ENCODE measurements at regions of chr1 and their contacts with region 1.

Region 1: DNA sequence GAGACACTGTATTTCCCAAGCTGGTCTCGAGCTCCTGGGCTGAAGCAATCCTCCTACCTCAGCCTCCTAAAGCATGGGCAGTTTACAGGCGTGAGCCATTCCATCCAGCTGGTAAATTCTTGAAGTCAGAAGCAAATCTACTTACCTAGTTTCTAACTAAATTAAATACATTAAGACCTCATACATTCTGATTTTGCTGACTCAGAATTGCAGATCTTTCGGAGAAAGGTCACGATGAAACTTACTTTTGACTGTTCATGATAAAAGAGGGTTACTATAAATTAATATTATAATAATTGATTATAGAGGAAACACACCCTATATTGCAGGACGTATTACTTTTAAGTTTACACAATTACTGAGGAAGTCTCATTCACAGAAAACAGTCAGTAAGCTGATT is 132.3 kb downstream of the ZZZ3 start:
- DNase-seq: no peak

Region 2: DNA sequence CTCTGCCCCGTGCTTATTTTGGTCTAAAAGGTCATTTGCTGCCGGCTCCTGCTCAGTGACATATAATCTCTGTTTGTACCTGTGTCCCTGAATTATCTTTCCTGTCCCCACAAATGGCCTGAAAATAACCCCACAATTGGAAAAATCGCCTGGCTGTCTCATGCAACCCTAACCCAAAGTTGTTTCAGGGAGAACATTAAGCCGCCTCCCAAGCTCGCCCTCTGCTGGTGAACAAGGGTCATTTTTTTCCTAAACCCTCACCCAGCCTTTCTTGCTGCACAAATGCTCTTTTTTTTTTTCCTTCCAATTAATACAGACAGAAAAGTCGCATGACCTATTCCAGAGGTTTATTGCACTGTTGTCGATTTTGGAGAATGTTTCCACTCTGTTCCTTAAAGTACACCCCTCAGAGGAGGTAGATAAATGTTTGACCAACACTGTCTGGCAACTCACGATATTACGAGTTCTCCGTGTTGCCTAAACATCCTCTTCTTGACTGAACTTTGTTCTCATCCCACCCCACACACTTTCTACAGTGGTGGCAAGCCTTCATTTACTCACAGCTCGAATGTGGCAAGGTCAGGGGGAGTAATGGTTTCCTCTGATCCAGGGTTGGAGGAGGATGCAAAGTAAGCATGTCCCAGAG is 16.4 kb before region 1 on chr1:
- CTCF ChIA-PET with region 1: interaction called, 10 read pairs
- POLR2A ChIA-PET with region 1: no interaction called
- DNase-seq: peak; percentile 87

Measured in HEK293T (cell line).